ENCODE measurements at regions of chr2 and their contacts with region 1.

Region 1: DNA sequence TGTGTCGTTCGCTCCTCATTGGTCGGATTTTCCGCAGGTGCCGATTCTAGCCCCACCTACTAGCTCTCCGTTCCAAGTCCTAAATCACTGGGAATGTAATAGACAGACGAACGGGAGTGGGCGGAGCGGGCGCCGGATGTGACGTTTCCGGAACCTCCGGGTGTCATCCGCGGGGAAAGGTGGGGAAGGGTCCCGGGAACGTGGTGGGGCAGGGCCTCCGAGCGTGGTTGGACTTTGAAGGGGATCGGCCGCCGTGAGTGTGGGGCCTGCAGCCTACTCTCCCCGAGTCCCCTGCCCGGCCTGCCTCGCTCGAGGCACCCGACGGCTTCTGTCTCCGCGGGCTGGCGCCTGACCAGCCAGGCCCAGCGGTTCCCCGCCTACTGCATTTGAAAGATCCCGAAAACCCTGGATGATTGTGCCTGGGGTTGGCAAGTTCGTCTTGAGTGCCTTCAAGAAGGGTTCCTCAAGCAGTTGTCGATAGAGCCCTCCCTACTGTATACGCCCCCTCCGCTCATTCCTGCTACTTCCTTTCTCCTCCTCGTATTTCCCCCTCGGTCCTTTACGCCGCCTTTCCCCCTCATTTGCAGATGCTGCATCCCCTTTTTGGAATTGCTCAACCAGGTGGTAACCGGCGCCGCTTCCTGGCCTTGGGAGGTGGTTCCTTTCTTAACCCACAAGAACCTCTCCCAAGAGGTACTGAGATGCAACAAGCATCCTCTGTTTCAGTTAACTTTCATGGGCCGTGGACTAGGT is at the start of gene STAMBP:
- DNase-seq: peak; percentile 97
- ATAC-seq: peak; percentile 98 to 99 (median 98)
- H3K4me3 ChIP-seq: peak within 1 kb of the TSS; percentile 68 to 97 (median 86)
- H3K27ac ChIP-seq: peak within 1 kb of the TSS; percentile 88 to 99 (median 95)
- H3K4me1 ChIP-seq: peaks cover 0 to 40% (median 17%) of the 10 kb centered on the region in 12 donors
- H3K27me3 ChIP-seq: no peaks in the 10 kb centered on the region
- CTCF ChIP-seq: no peak
- POLR2A ChIP-seq: peak; percentile 52 to 75
- total RNA-seq, gene STAMBP: 27.2 to 38.0 (median 34.4) TPM

Region 2: GRCh38 chr2:73611867-73612266 is 217.1 kb before region 1 on chr2:
- intact Hi-C with region 1: no loop called
- DNase-seq: no peak
- ATAC-seq: no peak
- H3K4me3 ChIP-seq: no peak overlapping the region
- H3K27ac ChIP-seq: no peak overlapping the region
- H3K4me1 ChIP-seq: peaks cover 0 to 9% (median 0%) of the 10 kb centered on the region in 12 donors
- H3K27me3 ChIP-seq: no peaks in the 10 kb centered on the region
- CTCF ChIP-seq: no peak
- POLR2A ChIP-seq: no peak

Region 3: DNA sequence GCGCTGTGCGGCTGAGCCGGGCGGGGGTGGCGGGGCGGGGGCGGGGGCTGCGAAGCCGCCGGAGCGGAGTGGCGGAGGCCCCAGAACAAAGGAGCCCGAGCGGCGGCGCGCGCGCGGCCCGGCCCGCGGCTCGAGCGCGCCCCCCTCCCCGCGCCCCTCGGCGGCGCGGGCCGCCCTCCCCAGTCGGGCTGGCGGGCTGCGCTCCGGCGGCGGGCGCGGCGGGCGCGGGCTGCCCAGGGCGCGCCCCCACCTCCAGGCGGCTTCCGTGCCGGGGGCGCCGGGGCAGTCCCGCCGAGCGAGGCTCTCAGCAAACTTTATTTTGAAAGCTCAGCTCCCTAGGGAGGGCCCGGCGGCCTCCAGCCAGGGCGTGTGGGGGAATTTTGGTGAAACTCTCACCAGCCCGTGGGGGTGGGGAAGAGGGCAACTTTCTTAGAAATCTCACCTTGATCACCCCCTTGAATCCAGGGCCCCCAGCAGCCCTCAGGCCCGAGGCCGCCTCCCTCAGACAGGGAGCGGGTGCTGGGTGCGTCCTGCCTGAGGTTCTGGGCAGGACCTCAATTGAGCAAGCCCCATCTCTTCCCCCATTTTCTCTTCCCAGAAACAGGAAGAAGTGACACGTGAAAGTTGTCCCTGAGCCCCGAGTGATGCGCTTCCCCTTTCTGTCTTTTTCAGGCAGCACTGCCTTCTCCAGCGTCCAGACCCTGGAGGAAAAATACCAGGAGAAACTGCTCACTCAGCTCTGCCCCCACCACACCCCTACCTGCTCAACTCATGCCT is 156.5 kb after region 1 on chr2:
- intact Hi-C with region 1: loop called in 4 of 10 experiments (anchors 10 kb)
- DNase-seq: peak in 4 of 5 donors; percentile 53 to 77 (median 56)
- ATAC-seq: peak in 3 of 4 donors; percentile 5 to 11 (median 11)
- H3K4me3 ChIP-seq: peak overlapping the region; percentile 31 to 71 (median 60)
- H3K27ac ChIP-seq: peak overlapping the region in 10 of 12 donors; percentile 46 to 95 (median 64)
- H3K4me1 ChIP-seq: peaks cover 0 to 84% (median 51%) of the 10 kb centered on the region in 12 donors
- H3K27me3 ChIP-seq: no peaks in the 10 kb centered on the region
- CTCF ChIP-seq: no peak
- POLR2A ChIP-seq: peak in 1 of 2 donors; percentile 38

Region 4: GRCh38 chr2:74147727-74148456 is 318.9 kb after region 1 on chr2 and contains the start of gene BOLA3:
- intact Hi-C with region 1: loop called in 4 of 10 experiments (anchors 1 to 10 kb)
- DNase-seq: peak; percentile 89 to 94 (median 90)
- ATAC-seq: peak; percentile 76 to 99 (median 97)
- H3K4me3 ChIP-seq: peak within 1 kb of the TSS; percentile 66 to 99 (median 88)
- H3K27ac ChIP-seq: peak within 1 kb of the TSS in 11 of 12 donors; percentile 62 to 81 (median 74)
- H3K4me1 ChIP-seq: peaks cover 3 to 25% (median 16%) of the 10 kb centered on the region in 12 donors
- H3K27me3 ChIP-seq: no peaks in the 10 kb centered on the region
- CTCF ChIP-seq: peak; percentile 59 to 95 (median 82)
- POLR2A ChIP-seq: peak in 1 of 2 donors; percentile 58
- total RNA-seq, gene BOLA3: 52.2 to 165 (median 65.3) TPM

Region 5: DNA sequence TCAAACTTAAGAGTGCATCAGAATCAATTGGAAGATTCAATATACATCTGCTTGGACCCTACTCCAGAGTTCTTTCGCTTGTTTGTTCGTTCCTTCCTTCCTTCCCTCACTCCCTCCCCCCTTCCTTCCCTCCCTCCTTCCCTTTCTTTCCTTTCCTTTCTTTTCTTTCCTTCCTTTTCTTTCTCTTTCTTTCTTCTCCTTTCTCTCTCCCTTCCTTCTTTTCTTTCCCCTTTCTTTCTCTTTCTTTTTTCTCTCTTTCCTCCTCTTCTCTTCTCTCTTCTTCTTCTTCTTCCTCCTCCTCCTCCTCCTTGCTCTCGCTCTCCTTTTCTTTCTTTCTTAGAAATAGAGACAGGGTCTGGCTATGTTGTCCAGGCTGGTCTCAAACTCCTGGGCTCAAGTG is 415.3 kb after region 1 on chr2:
- intact Hi-C with region 1: no loop called
- DNase-seq: no peak
- ATAC-seq: no peak
- H3K4me3 ChIP-seq: no peak overlapping the region
- H3K27ac ChIP-seq: no peak overlapping the region
- H3K4me1 ChIP-seq: peaks cover 0 to 8% (median 0%) of the 10 kb centered on the region in 12 donors
- H3K27me3 ChIP-seq: no peaks in the 10 kb centered on the region
- CTCF ChIP-seq: no peak
- POLR2A ChIP-seq: no peak

Region 6: GRCh38 chr2:74414881-74415761 is 586.1 kb after region 1 on chr2:
- intact Hi-C with region 1: loop called in 1 of 10 experiments (anchors 1 kb)
- DNase-seq: peak; percentile 66 to 80 (median 69)
- ATAC-seq: peak; percentile 51 to 81 (median 76)
- H3K4me3 ChIP-seq: peak overlapping the region; percentile 42 to 77 (median 65)
- H3K27ac ChIP-seq: peak overlapping the region in 11 of 12 donors; percentile 36 to 83 (median 58)
- H3K4me1 ChIP-seq: peaks cover 0 to 43% (median 20%) of the 10 kb centered on the region in 12 donors
- H3K27me3 ChIP-seq: no peaks in the 10 kb centered on the region
- CTCF ChIP-seq: peak; percentile 23 to 69 (median 48)
- POLR2A ChIP-seq: no peak

Region 7: DNA sequence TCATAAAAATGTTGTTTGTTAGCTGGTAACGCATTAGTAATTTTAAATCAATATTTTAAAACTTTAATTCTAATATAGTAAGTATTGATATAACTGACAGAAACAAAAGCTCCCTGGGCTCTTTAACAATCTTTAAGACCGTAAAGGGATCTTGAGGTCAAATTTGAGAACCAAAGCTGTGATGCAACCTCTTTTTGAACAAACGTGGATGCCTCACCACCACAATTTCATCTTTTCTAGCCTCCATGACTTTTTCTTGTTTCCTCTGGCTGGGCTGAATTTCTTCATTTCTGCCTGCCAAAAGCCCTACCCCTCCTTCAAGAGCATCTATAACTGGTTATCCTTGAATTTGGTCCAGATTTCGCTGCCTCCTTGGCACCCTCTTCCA is 1128.9 kb after region 1 on chr2:
- intact Hi-C with region 1: no loop called
- DNase-seq: no peak
- ATAC-seq: no peak
- H3K4me3 ChIP-seq: peak overlapping the region; percentile 51 to 81 (median 67)
- H3K27ac ChIP-seq: peak overlapping the region; percentile 34 to 97 (median 92)
- H3K4me1 ChIP-seq: peaks cover 0 to 22% (median 9%) of the 10 kb centered on the region in 12 donors
- H3K27me3 ChIP-seq: no peaks in the 10 kb centered on the region
- CTCF ChIP-seq: no peak
- POLR2A ChIP-seq: no peak